ENCODE measurements at regions of chr22 and their contacts with region 1.

Region 1: GRCh38 chr22:29773233-29773632 is 6.1 kb downstream of the UQCR10 start:
- DNase-seq: no peak
- ATAC-seq: no peak
- H3K4me3 ChIP-seq: no peak overlapping the region
- H3K4me3 Mint-ChIP-seq: no peak overlapping the region
- H3K27ac ChIP-seq: no peak overlapping the region
- H3K27ac Mint-ChIP-seq: no peak overlapping the region
- H3K4me1 ChIP-seq: peaks cover 1 to 6% of the 10 kb centered on the region in 2 experiments
- H3K4me1 Mint-ChIP-seq: peaks cover 10 to 16% (median 10%) of the 10 kb centered on the region in 3 donors
- H3K27me3 ChIP-seq: no peaks in the 10 kb centered on the region
- H3K27me3 Mint-ChIP-seq: no peaks in the 10 kb centered on the region

Region 2: GRCh38 chr22:31019191-31019942 is 1246.1 kb after region 1 on chr22:
- CTCF ChIA-PET with region 1: no interaction called
- POLR2A ChIA-PET with region 1: interaction called in 1 of 2 experiments, 10 read pairs
- DNase-seq: no peak
- ATAC-seq: no peak
- H3K4me3 ChIP-seq: no peak overlapping the region
- H3K4me3 Mint-ChIP-seq: no peak overlapping the region
- H3K27ac ChIP-seq: no peak overlapping the region
- H3K27ac Mint-ChIP-seq: no peak overlapping the region
- H3K4me1 ChIP-seq: no peaks in the 10 kb centered on the region
- H3K4me1 Mint-ChIP-seq: no peaks in the 10 kb centered on the region
- H3K27me3 ChIP-seq: peaks cover 0 to 5% of the 10 kb centered on the region in 2 experiments
- H3K27me3 Mint-ChIP-seq: no peaks in the 10 kb centered on the region

Measured in T-cell (primary cell).